Tibial artery (tissue), 4 donors: ENCODE measurements at regions of chr11 and their contacts with region 1.

Region 1: DNA sequence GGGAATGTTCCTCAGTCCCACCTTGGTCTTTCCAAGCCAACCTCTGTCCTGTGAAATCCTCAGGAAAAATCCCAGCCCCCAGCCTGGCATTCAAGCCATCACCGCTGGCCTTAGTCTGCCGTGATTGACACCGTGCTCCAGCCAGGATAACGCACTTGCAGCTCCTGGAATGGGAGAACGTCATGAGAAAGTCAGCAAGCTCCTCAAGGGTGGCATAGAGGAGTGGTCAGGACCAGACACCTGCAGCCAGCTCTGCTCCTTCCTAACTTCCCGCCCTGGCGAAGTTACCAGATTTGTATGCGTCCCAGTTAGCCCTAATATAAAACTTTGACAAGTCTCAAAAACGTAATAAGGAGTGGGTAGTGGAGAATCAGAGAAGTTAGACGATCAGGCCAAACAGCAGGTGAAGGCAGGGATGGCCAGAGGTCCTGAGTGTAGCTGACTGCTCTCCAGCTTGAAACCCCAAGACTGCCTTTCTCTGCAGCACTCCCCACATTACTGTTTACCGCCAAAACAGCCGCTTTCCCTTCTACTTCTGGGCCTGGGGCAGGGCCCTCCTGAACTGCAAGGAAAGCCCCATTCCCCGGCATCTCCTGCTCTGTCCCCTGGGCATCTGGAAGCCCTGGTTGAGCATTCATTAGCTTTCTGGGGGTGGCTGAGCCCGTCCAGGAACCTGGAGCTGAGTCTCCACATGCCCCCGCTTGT is 1.3 kb upstream of the DKK3 start:
- DNase-seq: no peak
- H3K4me3 ChIP-seq: peak overlapping the region; percentile 63 to 87
- H3K27ac ChIP-seq: peak overlapping the region; percentile 57 to 81
- H3K4me1 ChIP-seq: peaks cover 0 to 49% (median 32%) of the 10 kb centered on the region in 4 donors
- H3K27me3 ChIP-seq: no peaks in the 10 kb centered on the region
- CTCF ChIP-seq: no peak

Region 2: DNA sequence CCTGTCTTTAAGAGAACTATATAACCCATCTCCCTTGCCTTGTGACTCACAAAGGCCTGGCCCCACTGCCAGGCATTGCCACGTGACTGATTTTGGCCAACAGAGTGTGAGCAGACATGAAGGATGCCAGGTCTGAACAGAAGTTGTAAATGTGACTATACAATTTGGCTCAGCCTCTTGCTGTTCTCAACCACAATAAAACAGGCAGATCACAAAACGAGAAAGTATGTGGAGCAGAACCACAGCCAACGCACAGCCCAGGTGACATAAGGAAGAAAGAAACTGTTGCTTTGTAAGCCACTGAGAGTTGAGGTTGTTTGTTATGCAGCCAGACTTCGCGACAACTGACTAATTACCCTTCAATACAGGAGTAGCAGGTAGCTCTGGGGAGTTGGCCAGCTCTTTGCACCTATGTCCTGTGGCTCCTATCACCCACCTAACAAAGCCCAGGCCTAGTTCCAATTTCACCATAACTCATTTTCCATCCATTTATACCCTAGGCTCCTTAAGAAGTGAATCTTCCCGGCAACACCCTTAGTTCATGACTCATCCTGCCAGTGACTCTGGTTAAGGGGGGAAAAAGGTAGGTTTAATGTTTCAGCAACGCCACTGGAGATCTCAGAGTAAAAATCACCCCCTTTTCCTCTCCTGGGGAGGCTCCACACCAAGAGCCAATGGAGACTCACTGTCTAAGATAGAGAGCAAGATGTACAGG is 441.7 kb before region 1 on chr11:
- intact Hi-C with region 1: no loop called
- DNase-seq: no peak
- H3K4me3 ChIP-seq: no peak overlapping the region
- H3K27ac ChIP-seq: peak overlapping the region; percentile 72 to 74
- H3K4me1 ChIP-seq: peaks cover 0 to 64% (median 40%) of the 10 kb centered on the region in 4 donors
- H3K27me3 ChIP-seq: no peaks in the 10 kb centered on the region
- CTCF ChIP-seq: no peak

Region 3: GRCh38 chr11:11977206-11977938 is 32.4 kb before region 1 on chr11:
- intact Hi-C with region 1: loop called (anchors 5 kb)
- DNase-seq: peak; percentile 76 to 88
- H3K4me3 ChIP-seq: peak overlapping the region in 1 of 2 donors; percentile 13
- H3K27ac ChIP-seq: peak overlapping the region; percentile 74 to 83
- H3K4me1 ChIP-seq: peaks cover 18 to 100% (median 77%) of the 10 kb centered on the region in 4 donors
- H3K27me3 ChIP-seq: no peaks in the 10 kb centered on the region
- CTCF ChIP-seq: no peak